Activated CD4-positive, alpha-beta T cell treated with anti-CD3 and anti-CD28 coated beads for 36 hours (primary cell): ENCODE measurements at regions of chr4 and their contacts with region 1.

Region 1: GRCh38 chr4:122602277-122603142 is 18.4 kb downstream of the IL21 start:
- DNase-seq: peak; percentile 40
- ATAC-seq: peak; percentile 89
- H3K4me3 Mint-ChIP-seq: peak overlapping the region; percentile 54
- H3K27ac Mint-ChIP-seq: peak overlapping the region; percentile 59
- H3K4me1 Mint-ChIP-seq: peaks cover 30% of the 10 kb centered on the region
- H3K27me3 Mint-ChIP-seq: peaks cover 3% of the 10 kb centered on the region

Region 2: GRCh38 chr4:122584519-122584918 is 18.0 kb before region 1 on chr4:
- CTCF ChIA-PET with region 1: interaction called, 12 read pairs
- POLR2A ChIA-PET with region 1: interaction called, 3 read pairs
- intact Hi-C with region 1: loop called in 1 of 2 experiments (anchors 1 kb)
- DNase-seq: peak; percentile 33
- ATAC-seq: peak; percentile 93
- H3K4me3 Mint-ChIP-seq: peak overlapping the region; percentile 44
- H3K27ac Mint-ChIP-seq: peak overlapping the region; percentile 92
- H3K4me1 Mint-ChIP-seq: peaks cover 57% of the 10 kb centered on the region
- H3K27me3 Mint-ChIP-seq: no peaks in the 10 kb centered on the region

Region 3: DNA sequence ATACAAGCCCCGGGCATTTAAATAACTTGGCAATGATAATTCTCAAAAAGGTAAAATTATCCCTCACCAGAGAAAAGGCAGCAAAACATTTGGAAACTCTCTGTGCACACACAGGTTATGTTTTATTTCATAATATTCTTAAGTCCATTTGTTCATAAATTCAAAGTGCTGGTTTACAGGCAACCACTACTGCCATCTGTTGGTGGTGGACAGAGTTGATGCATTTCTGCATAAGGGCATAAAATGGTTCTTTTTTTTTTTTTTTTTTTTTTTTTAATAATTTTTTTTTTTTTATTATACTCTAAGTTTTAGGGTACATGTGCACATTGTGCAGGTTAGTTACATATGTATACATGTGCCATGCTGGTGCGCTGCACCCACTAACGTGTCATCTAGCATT is 49.9 kb after region 1 on chr4:
- CTCF ChIA-PET with region 1: interaction called, 7 read pairs
- POLR2A ChIA-PET with region 1: no interaction called
- intact Hi-C with region 1: loop called in 1 of 2 experiments (anchors 5 kb)
- DNase-seq: peak; percentile 77
- ATAC-seq: peak; percentile 65
- H3K4me3 Mint-ChIP-seq: no peak overlapping the region
- H3K27ac Mint-ChIP-seq: peak overlapping the region; percentile 9
- H3K4me1 Mint-ChIP-seq: peaks cover 11% of the 10 kb centered on the region
- H3K27me3 Mint-ChIP-seq: no peaks in the 10 kb centered on the region

Region 4: GRCh38 chr4:122716825-122717448 is 114.4 kb after region 1 on chr4:
- CTCF ChIA-PET with region 1: interaction called, 49 read pairs
- POLR2A ChIA-PET with region 1: interaction called, 4 read pairs
- intact Hi-C with region 1: loop called (anchors 1 kb)
- DNase-seq: peak; percentile 89
- ATAC-seq: peak; percentile 90
- H3K4me3 Mint-ChIP-seq: peak overlapping the region; percentile 26
- H3K27ac Mint-ChIP-seq: peak overlapping the region; percentile 72
- H3K4me1 Mint-ChIP-seq: peaks cover 43% of the 10 kb centered on the region
- H3K27me3 Mint-ChIP-seq: peaks cover 2% of the 10 kb centered on the region

Region 5: DNA sequence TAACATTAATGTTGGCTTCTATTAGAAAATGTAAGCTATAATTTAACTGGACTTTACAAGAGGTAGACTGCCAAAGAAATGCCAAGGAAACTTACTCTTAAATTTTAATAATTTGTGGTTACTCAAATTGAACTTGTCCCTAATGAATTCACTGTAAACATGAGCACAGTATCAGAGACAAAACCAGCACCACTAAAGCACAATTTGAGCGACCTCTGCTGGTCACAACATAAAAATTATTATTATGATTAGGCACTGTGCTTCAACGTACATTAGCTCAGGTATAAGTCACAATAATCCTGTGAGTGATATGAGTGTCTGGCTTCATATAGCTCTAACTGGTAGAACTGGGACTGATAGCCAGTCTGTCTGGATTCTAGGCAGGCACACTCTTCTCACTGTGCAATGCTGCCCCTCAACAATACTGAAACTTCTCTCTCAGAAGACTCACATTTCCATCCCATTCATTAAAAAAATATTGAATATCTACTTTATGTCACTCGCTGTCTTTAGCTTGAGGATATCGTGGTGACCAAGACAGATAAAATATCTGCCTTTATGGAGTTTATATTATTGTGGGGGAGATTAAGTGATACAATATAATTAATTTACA is 311.9 kb after region 1 on chr4:
- CTCF ChIA-PET with region 1: interaction called, 22 read pairs
- POLR2A ChIA-PET with region 1: no interaction called
- intact Hi-C with region 1: loop called (anchors 1 kb)
- DNase-seq: peak; percentile 51
- ATAC-seq: peak; percentile 85
- H3K4me3 Mint-ChIP-seq: no peak overlapping the region
- H3K27ac Mint-ChIP-seq: no peak overlapping the region
- H3K4me1 Mint-ChIP-seq: no peaks in the 10 kb centered on the region
- H3K27me3 Mint-ChIP-seq: no peaks in the 10 kb centered on the region